ENCODE measurements at regions of chr5 and their contacts with region 1.

Region 1: DNA sequence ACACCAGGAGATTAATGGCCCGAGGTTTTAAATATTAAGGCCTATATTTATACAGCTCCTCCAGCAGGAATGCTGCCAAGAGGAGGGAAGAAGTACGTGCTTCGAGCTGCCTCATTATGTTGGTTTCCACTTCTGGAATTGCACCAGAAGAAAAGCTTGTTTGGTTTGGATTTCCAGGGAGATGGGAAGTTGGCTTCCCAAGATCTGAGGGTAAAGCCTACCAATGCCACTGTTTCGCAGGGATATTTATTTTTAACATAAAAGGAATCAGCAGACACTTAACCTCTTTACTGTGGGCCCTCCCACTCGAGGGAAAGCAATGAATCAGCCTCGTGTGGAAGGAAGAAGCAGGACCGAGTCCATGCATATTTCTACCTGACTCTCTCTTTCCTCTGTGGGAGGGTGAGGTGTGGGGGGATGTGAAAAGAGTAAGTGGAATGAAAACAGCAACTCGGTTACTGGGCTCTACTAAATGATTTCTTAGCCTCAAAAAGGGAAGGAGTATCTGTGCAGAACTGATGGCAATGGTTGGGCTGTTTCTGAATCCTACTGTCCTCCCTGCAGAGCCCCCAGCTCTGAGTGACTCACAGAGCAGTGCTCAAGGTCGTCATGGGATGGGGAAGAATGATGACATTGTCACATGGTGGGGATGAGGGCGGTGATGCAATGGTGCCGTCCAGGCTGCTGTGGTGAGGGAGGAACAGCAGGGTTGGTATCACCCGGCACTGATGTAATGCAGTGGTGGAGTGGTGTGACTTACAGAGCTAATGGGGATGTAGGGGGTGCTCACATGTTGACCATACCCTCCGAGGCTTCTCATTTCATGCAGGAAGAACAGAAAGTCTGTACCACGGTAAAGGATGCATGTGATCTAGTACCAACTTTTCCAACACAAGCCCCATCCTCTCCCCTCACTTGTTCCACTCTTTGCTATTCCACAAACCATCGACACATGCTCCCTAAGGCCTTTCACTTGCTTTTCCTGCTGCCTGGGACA is 215.0 kb upstream of the PANK3 start:
- DNase-seq: no peak
- H3K4me3 Mint-ChIP-seq: no peak overlapping the region
- H3K27ac Mint-ChIP-seq: peak overlapping the region; percentile 95
- H3K4me1 Mint-ChIP-seq: peaks cover 56% of the 10 kb centered on the region
- H3K27me3 Mint-ChIP-seq: no peaks in the 10 kb centered on the region

Region 2: DNA sequence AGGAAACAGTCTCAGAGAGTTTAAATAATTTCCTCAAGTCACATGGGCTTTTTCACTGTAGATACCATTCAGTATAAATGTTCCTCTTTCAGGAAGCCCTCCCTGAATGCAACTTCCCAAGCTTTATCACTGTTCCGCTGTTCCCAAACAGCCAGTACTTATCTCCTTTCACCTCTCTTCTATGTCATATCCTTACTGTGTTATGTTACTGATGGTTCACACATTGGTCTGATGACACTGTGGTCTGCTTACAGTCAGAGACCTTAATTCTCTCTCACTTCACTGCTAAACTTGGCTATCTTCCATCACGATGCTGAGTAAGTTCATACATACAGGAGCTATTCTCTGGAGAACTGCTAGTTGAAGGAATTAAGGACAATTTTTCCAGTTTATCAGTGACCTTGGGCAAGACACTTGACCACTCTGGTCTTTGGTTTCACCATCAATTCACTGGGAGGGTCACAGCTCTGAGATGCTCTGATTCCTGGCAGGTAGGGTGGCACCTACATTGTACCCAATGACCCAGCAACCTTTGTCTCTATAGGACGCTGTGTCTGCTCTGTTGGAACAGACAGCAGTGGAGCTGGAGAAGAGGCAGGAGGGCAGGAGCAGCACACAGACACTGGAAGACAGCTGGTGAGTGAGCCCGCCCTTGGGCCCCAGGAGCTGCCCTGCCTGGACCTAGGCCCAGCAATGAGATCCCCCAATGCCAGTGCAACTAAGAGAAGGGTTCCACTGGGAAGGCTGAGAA is 350.0 kb before region 1 on chr5:
- intact Hi-C with region 1: no loop called
- DNase-seq: no peak
- H3K4me3 Mint-ChIP-seq: no peak overlapping the region
- H3K27ac Mint-ChIP-seq: no peak overlapping the region
- H3K4me1 Mint-ChIP-seq: no peaks in the 10 kb centered on the region
- H3K27me3 Mint-ChIP-seq: peaks cover 7% of the 10 kb centered on the region

Region 3: DNA sequence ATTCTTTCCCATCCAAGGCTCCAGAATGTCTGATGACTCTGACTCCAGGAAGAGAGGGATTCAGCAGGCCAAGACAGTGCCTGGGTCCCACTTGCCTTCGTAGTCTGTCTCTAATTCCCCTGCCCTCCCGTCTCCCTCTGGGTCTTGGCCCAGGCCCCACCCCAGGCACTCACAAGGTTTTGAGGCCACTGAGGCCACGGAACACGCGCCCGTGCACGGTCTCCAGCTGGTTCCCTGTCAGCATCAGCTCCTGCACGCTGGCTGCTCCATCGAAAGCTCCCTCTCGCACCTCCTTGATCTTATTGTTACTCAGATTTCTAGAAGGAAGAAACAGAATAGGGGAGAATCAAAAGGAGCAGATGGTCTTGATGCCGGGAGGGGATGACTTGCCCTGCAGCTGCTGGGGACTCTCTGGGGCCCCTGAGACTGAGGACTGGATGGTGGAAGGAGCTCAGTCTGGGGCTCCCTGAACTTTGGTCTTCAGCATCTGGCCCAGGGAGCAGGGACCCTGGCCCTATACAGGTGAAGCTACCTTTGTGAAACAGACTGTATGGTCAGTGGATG is 40.4 kb before region 1 on chr5:
- intact Hi-C with region 1: loop called (anchors 5 kb)
- DNase-seq: no peak
- H3K4me3 Mint-ChIP-seq: no peak overlapping the region
- H3K27ac Mint-ChIP-seq: no peak overlapping the region
- H3K4me1 Mint-ChIP-seq: no peaks in the 10 kb centered on the region
- H3K27me3 Mint-ChIP-seq: no peaks in the 10 kb centered on the region

Region 4: GRCh38 chr5:168822745-168823281 is 28.7 kb after region 1 on chr5:
- intact Hi-C with region 1: loop called (anchors 1 kb)
- DNase-seq: no peak
- H3K4me3 Mint-ChIP-seq: peak overlapping the region; percentile 65
- H3K27ac Mint-ChIP-seq: peak overlapping the region; percentile 94
- H3K4me1 Mint-ChIP-seq: peaks cover 33% of the 10 kb centered on the region
- H3K27me3 Mint-ChIP-seq: no peaks in the 10 kb centered on the region